ENCODE measurements at regions of chr14 and their contacts with region 1.

Region 1: DNA sequence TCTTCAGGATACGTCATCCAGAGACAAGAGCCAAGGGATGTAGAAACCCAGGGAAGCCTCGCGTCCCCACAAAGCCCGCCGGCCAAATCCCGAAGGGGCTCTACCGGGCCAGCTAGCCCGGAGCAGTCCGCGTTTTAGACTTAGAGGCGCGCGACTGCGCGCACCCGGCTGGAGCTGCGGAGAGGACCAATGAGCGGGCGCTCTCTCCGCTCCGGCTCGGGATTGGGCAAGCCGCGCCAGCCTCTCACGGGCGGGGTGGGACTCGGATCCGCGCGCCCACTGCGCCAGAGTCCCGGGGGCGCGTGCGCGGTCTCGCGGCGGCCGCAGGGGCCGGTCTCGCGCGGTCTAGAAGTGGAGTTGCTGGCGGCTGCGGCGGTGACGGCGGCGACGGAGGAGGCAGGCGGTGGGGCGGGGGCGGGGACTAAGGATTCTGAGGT is 239 bp upstream of the PALS1 start:
- DNase-seq: peak; percentile 95 to 97
- ATAC-seq: peak; percentile 96 to 100 (median 99)
- H3K4me3 ChIP-seq: peak overlapping the region; percentile 65 to 97 (median 90)
- H3K27ac ChIP-seq: peak overlapping the region; percentile 61 to 98 (median 95)
- H3K4me1 ChIP-seq: peaks cover 0 to 22% (median 10%) of the 10 kb centered on the region in 9 donors
- H3K27me3 ChIP-seq: no peaks in the 10 kb centered on the region
- CTCF ChIP-seq: no peak

Region 2: GRCh38 chr14:67166450-67166853 is 74.5 kb before region 1 on chr14:
- intact Hi-C with region 1: loop called in 1 of 10 experiments (anchors 5 kb)
- DNase-seq: peak in 1 of 2 donors; percentile 16
- ATAC-seq: no peak
- H3K4me3 ChIP-seq: no peak overlapping the region
- H3K27ac ChIP-seq: no peak overlapping the region
- H3K4me1 ChIP-seq: no peaks in the 10 kb centered on the region
- H3K27me3 ChIP-seq: no peaks in the 10 kb centered on the region
- CTCF ChIP-seq: peak; percentile 30 to 88 (median 77)

Region 3: DNA sequence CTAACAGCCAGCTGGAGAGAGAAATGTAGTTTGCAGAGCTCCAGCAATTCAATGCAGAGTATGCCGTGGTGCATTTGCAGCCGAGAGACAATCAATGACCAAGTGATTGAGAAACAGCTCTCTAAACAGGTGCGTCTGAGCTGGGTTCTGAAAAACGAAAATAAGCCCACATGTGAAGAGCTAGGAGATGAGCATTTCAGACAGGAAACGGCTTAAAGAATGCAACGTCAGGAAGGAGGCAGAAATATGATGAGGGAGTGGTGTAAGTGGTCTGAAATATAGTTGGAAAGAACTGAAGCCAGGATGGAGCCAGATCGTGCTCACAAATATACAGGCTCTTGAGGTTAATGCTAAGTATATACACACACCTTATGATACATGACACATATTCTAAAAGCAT is 54.2 kb before region 1 on chr14:
- intact Hi-C with region 1: loop called in 1 of 10 experiments (anchors 2 kb)
- DNase-seq: no peak
- ATAC-seq: no peak
- H3K4me3 ChIP-seq: no peak overlapping the region
- H3K27ac ChIP-seq: no peak overlapping the region
- H3K4me1 ChIP-seq: peaks cover 0 to 9% (median 0%) of the 10 kb centered on the region in 9 donors
- H3K27me3 ChIP-seq: no peaks in the 10 kb centered on the region
- CTCF ChIP-seq: no peak

Region 4: DNA sequence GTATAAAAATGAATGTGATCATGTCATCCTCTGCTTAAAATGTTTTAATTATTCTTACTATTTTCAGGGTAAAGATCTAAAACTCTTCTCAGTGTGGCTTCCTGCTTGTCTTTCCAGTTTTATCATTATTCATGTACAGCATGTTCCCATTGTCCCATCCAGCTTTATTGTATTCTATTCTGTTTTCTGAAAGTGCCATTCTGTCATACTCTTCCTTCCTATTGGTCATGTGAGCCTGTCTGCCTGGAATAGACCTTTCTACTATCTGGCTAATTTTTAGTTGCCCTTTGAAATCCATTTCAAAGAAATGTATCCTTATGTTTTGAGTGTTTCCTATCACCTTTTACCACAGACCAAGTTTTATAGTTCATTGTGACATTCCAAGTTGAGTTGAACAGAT is 35.1 kb after region 1 on chr14:
- intact Hi-C with region 1: loop called in 2 of 10 experiments (anchors 5 kb)
- DNase-seq: no peak
- ATAC-seq: peak in 1 of 8 donors; percentile 42
- H3K4me3 ChIP-seq: no peak overlapping the region
- H3K27ac ChIP-seq: peak overlapping the region in 1 of 10 donors; percentile 15
- H3K4me1 ChIP-seq: peaks cover 0 to 30% (median 15%) of the 10 kb centered on the region in 9 donors
- H3K27me3 ChIP-seq: no peaks in the 10 kb centered on the region
- CTCF ChIP-seq: no peak

Region 5: DNA sequence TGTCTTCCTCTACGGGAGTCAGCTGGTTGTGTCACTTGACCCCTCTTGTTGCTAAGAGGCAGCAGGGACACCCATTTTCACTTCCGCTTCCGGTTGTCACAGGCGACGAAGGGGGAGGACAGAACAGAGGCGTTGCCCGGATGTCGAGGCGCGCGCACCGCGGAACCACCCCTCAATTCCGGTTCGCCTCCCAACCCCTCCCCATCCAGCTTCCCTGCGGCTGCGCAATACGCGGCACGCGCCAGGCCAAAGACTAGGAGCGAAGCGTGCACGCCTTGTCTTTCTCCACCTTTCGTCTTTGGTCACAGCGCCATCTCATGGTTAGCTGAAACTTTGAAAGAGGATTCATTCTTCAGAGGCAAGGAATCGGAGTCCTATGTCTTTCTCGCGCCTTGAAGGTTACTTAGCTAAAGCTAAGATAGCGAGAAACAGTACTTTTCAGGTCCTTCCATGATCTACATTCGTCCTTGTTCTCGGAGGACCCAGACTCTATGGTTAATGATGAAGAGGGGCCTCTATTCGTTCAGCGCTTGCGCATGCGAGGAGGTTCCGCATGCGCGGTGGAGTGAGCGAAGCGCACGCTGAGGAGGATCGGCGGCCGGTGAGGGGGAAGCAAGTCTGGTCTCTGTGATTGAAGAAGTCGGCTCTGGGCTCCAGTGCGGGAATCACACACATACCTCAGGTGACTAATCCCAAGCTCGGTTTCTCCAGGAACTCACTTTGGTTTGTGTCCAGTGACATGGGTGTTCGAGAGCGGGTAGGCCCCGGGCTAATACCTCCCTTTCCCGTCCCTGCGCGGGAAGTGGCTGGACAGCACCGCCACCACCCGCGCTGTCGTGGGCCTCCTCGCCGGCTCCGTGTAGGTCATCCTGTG is 119.0 kb after region 1 on chr14 and contains the starts of genes ATP6V1D and EIF2S1:
- intact Hi-C with region 1: loop called in 3 of 10 experiments (anchors 2 to 5 kb)
- DNase-seq: peak; percentile 99 to 100
- ATAC-seq: peak; percentile 97 to 100 (median 98)
- H3K4me3 ChIP-seq: peak within 1 kb of the TSS; percentile 69 to 97 (median 78)
- H3K27ac ChIP-seq: peak within 1 kb of the TSS; percentile 92 to 98 (median 97)
- H3K4me1 ChIP-seq: peaks cover 14 to 80% (median 71%) of the 10 kb centered on the region in 9 donors
- H3K27me3 ChIP-seq: no peaks in the 10 kb centered on the region
- CTCF ChIP-seq: peak; percentile 75 to 99 (median 92)
- total RNA-seq, gene ATP6V1D: 118 to 193 (median 175) TPM
- total RNA-seq, gene EIF2S1: 82.3 to 118 (median 94.3) TPM